Calu3 (cell line): ENCODE measurements at regions of chr1 and their contacts with region 1.

Region 1: GRCh38 chr1:234610348-234611152 is 572 bp upstream of the IRF2BP2 start:
- DNase-seq: peak; percentile 96
- H3K4me3 Mint-ChIP-seq: peak overlapping the region; percentile 89
- H3K27ac Mint-ChIP-seq: peak overlapping the region; percentile 97
- H3K4me1 Mint-ChIP-seq: peaks cover 53% of the 10 kb centered on the region
- H3K27me3 Mint-ChIP-seq: no peaks in the 10 kb centered on the region
- CTCF ChIP-seq: no peak

Region 2: DNA sequence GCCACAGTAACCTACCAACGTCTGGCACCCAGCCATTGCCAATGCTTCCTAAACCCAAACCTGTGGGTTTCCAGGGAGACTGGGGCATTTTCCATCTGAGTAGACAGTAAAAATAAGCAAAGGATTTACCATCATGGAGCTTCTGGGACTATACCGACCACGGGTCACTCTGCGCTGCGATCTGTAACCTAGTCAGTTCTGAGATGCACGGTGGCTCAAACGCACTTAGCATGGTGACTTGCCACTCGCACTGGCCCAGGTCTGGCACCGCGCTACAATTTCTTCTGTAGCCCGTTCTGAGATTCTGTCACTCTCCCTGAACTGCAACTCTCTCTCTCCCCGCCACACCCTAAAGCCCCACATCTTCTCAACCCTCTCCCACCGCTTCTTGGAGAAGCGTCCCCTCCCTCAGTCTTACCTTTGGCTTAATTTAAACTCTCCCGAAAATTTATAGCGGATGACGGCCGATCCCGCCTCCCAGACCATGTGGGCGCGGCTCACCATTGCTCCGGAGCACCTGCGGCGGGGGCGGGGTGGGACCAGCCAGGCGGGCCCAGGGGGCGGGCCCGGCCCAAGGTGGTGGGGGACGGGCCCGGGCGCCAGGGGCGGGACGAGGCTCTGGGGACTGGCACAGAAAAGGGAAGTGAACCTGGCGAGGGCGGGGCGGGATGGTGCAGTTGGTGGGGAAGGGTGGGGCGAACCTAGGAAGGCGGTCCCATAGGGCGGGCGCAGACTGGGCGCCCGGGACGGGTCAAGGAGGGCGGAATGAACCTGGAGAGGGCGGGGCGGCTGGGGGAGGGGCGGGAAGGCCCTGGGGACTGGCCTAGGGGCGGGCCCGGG is 1283.5 kb before region 1 on chr1:
- CTCF ChIA-PET with region 1: no interaction called
- intact Hi-C with region 1: no loop called
- DNase-seq: peak; percentile 100
- H3K4me3 Mint-ChIP-seq: peak overlapping the region; percentile 87
- H3K27ac Mint-ChIP-seq: peak overlapping the region; percentile 74
- H3K4me1 Mint-ChIP-seq: peaks cover 20% of the 10 kb centered on the region
- H3K27me3 Mint-ChIP-seq: no peaks in the 10 kb centered on the region
- CTCF ChIP-seq: no peak

Region 3: GRCh38 chr1:234499119-234499942 is 111.2 kb before region 1 on chr1:
- CTCF ChIA-PET with region 1: interaction called, 17 read pairs
- intact Hi-C with region 1: no loop called
- DNase-seq: peak; percentile 95
- H3K4me3 Mint-ChIP-seq: peak overlapping the region; percentile 51
- H3K27ac Mint-ChIP-seq: peak overlapping the region; percentile 97
- H3K4me1 Mint-ChIP-seq: peaks cover 87% of the 10 kb centered on the region
- H3K27me3 Mint-ChIP-seq: no peaks in the 10 kb centered on the region
- CTCF ChIP-seq: peak; percentile 93

Region 4: DNA sequence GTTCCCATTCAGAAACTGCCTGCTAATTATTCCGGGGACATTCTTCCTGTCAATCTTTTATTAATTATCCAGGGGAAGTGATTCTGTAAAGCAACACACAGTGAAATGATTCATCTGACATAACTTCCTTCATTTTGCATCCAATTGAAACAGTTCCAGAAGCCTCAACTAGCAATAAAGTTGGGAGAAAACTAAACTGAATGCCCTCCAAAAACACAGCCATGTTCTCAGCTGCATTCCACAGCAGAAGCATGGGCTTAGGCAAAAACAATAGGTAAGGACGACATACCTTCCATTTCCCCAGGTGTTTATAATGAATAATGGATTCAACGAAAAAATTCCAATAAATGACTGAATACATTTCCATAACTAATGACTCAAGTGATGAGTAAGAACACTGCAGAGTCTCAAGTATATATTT is 94.7 kb before region 1 on chr1:
- CTCF ChIA-PET with region 1: no interaction called
- intact Hi-C with region 1: no loop called
- DNase-seq: no peak
- H3K4me3 Mint-ChIP-seq: no peak overlapping the region
- H3K27ac Mint-ChIP-seq: no peak overlapping the region
- H3K4me1 Mint-ChIP-seq: peaks cover 24% of the 10 kb centered on the region
- H3K27me3 Mint-ChIP-seq: no peaks in the 10 kb centered on the region
- CTCF ChIP-seq: no peak

Region 5: GRCh38 chr1:234638832-234639799 is 28.6 kb after region 1 on chr1:
- CTCF ChIA-PET with region 1: interaction called, 3 read pairs
- intact Hi-C with region 1: loop called (anchors 2 kb)
- DNase-seq: peak; percentile 80
- H3K4me3 Mint-ChIP-seq: peak overlapping the region; percentile 5
- H3K27ac Mint-ChIP-seq: peak overlapping the region; percentile 90
- H3K4me1 Mint-ChIP-seq: peaks cover 58% of the 10 kb centered on the region
- H3K27me3 Mint-ChIP-seq: no peaks in the 10 kb centered on the region
- CTCF ChIP-seq: no peak

Region 6: DNA sequence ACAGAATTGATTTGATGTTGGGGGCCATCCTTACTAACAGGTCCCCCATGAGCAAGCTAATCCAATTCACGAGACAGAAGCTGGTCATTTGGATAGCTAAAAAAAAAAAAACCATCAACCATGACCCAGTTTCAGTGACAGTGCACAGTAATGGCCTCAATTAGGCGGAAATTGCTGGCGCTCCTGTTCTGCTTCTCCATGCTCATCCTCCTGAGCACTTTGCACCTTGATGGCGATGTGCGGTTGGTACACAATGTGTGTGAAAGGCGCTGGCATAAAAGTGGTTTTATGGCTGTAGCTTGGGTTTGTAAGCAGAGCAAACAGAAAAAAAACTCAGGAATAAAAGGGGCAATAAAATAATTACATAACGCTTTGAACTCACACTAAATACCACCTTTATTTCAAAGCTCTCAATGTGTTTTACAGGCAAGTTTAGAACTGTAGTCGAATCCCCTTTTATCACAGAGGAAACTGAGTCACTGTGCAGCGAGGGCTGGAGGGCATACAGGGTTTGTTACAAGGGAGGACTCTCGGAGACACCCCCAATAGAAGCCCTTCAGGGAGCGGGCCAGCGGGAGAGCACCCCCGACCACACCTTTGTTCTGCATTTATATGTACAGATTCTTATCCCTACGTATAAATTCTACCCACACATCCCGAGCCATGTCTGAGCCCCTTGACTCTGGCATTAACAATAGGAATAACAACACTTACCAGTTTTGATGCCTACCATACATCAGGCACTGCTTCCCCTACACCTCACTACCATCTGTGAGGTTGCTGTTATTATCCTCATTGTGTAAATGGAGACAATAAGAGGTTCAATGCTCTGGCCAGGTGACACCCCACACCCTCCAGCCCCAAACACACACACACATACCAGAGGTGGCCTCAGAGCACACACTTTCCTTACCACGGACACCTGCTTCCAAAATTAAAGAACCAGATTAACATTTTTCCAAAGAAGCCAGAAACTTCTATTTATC is 212.9 kb after region 1 on chr1:
- CTCF ChIA-PET with region 1: no interaction called
- intact Hi-C with region 1: loop called (anchors 5 kb)
- DNase-seq: no peak
- H3K4me3 Mint-ChIP-seq: no peak overlapping the region
- H3K27ac Mint-ChIP-seq: no peak overlapping the region
- H3K4me1 Mint-ChIP-seq: peaks cover 20% of the 10 kb centered on the region
- H3K27me3 Mint-ChIP-seq: no peaks in the 10 kb centered on the region
- CTCF ChIP-seq: no peak

Region 7: GRCh38 chr1:234875953-234876855 is 265.7 kb after region 1 on chr1:
- CTCF ChIA-PET with region 1: no interaction called
- intact Hi-C with region 1: loop called (anchors 5 kb)
- DNase-seq: peak; percentile 42
- H3K4me3 Mint-ChIP-seq: no peak overlapping the region
- H3K27ac Mint-ChIP-seq: peak overlapping the region; percentile 36
- H3K4me1 Mint-ChIP-seq: peaks cover 52% of the 10 kb centered on the region
- H3K27me3 Mint-ChIP-seq: no peaks in the 10 kb centered on the region
- CTCF ChIP-seq: no peak